ENCODE measurements at regions of chr3 and their contacts with region 1.

Region 1: DNA sequence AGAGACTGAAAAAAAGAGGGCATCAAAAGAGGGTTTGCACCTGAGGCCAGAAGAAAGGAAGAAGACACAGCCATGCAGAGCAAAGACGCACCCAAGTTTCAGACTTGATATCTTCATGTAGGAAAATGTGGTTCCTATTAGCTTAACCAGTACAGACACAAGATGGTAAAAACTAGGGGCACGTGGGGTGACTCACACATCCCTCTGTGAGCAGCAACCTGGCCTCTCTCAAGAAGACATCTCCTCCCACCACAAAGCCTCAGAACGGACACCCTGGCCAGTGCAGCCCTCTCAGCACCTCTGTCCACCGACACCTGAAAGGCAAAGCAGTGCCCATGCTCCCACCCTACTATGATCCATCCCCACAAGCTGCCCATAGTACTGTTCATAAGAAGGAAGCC is 33.3 kb downstream of the GLB1 start:
- DNase-seq: peak; percentile 79
- H3K4me3 Mint-ChIP-seq: peak overlapping the region; percentile 8
- H3K27ac Mint-ChIP-seq: peak overlapping the region; percentile 93
- H3K4me1 Mint-ChIP-seq: peaks cover 83% of the 10 kb centered on the region
- H3K27me3 Mint-ChIP-seq: no peaks in the 10 kb centered on the region

Region 2: GRCh38 chr3:32983124-32983523 is 80.5 kb before region 1 on chr3:
- CTCF ChIA-PET with region 1: no interaction called
- POLR2A ChIA-PET with region 1: no interaction called
- DNase-seq: no peak
- H3K4me3 Mint-ChIP-seq: no peak overlapping the region
- H3K27ac Mint-ChIP-seq: no peak overlapping the region
- H3K4me1 Mint-ChIP-seq: peaks cover 21% of the 10 kb centered on the region
- H3K27me3 Mint-ChIP-seq: no peaks in the 10 kb centered on the region

Region 3: DNA sequence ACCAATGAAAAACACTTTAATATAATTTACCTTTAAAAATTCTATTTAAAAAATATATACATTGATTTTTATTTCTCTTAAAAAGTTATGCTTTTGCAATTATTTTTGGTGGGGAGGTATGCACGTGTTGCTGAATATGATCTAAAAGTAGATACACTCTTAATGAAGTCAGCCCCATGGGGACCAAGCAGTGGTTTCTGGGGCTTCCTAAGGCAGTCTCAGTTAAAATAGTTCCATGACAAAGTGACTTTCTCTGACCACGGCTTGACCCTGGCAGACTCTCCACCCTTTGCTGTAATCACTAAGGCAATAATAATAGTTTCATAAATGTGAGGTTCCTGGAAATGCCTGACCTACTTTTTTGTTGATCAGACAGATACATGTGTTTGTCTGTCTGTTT is 61.8 kb before region 1 on chr3:
- CTCF ChIA-PET with region 1: interaction called, 4 read pairs
- POLR2A ChIA-PET with region 1: interaction called, 10 read pairs
- DNase-seq: no peak
- H3K4me3 Mint-ChIP-seq: no peak overlapping the region
- H3K27ac Mint-ChIP-seq: no peak overlapping the region
- H3K4me1 Mint-ChIP-seq: peaks cover 80% of the 10 kb centered on the region
- H3K27me3 Mint-ChIP-seq: no peaks in the 10 kb centered on the region

Region 4: GRCh38 chr3:33030802-33031201 is 32.8 kb before region 1 on chr3:
- CTCF ChIA-PET with region 1: interaction called, 105 read pairs
- POLR2A ChIA-PET with region 1: interaction called, 41 read pairs
- DNase-seq: peak; percentile 72
- H3K4me3 Mint-ChIP-seq: no peak overlapping the region
- H3K27ac Mint-ChIP-seq: peak overlapping the region; percentile 41
- H3K4me1 Mint-ChIP-seq: peaks cover 31% of the 10 kb centered on the region
- H3K27me3 Mint-ChIP-seq: no peaks in the 10 kb centered on the region

Region 5: DNA sequence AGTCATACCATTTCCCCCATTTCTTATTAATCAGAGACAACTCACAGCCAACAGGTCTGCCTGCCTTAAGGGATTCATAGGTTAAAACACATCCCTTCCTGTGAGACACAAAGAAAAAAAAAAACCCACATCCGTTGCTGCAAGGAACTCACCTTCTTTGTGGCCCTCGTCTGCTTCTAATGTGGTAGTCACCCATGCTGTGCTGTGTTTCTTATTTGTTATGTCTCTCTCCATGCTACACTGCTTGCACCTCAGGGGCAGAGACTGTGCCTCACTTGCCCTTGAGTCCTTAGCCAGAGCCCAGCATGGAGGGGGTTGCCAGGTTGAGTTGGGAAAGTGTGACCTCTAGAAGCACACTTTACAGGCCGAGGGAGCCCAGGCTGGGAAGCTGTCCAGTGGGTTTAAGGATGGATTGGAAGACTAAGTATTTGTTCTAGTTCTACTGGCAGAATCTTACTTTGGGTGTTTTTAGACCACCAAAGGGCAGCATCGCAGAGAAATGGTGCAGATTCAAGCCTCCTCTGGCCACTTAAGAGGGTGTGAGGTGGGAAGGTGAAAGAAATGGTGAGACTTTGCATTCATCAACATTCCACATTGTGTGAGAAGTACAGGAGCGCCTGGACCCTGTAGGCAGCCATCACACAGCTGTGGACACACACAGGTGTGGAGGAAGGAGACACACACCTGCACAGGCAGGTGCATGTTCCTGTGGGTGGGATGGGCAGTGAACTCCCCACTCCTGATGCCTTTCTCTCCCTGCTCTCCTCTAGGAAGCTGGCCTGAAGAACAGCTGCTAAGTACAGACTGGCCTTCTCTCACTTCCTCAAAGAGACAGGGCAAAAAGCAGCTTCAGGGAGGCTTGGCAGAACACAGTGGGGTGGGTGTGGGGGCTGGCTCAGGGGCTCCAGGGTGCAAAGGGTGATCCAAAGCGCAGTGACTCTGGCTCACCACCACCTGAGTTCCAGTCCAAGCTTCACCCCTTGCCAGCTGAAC is 15.5 kb before region 1 on chr3:
- CTCF ChIA-PET with region 1: interaction called, 76 read pairs
- POLR2A ChIA-PET with region 1: interaction called, 211 read pairs
- DNase-seq: peak; percentile 68
- H3K4me3 Mint-ChIP-seq: peak overlapping the region; percentile 60
- H3K27ac Mint-ChIP-seq: peak overlapping the region; percentile 98
- H3K4me1 Mint-ChIP-seq: peaks cover 82% of the 10 kb centered on the region
- H3K27me3 Mint-ChIP-seq: no peaks in the 10 kb centered on the region

Measured in activated CD4-positive, alpha-beta memory T cell treated with anti-CD3 and anti-CD28 coated beads, Interleukin-2, amount 10 ng/mL, durations not matched to agents 7 days and 5 days (primary cell).